B cell (primary cell): ENCODE measurements at regions of chr14 and their contacts with region 1.

Region 1: GRCh38 chr14:35046048-35046741 is at the start of gene FAM177A1:
- DNase-seq: peak; percentile 99
- ATAC-seq: peak; percentile 94
- H3K4me3 ChIP-seq: peak within 1 kb of the TSS; percentile 70 to 97 (median 80)
- H3K4me3 Mint-ChIP-seq: peak within 1 kb of the TSS; percentile 87
- H3K27ac ChIP-seq: peak within 1 kb of the TSS; percentile 94 to 96
- H3K27ac Mint-ChIP-seq: peak within 1 kb of the TSS; percentile 95
- H3K4me1 ChIP-seq: peaks cover 11 to 15% of the 10 kb centered on the region in 2 donors
- H3K4me1 Mint-ChIP-seq: peaks cover 26% of the 10 kb centered on the region
- H3K27me3 ChIP-seq: no peaks in the 10 kb centered on the region
- H3K27me3 Mint-ChIP-seq: no peaks in the 10 kb centered on the region
- CTCF ChIP-seq: no peak
- total RNA-seq, gene FAM177A1: 32.1 and 39.4 TPM in 2 replicates

Region 2: GRCh38 chr14:34629657-34630529 is 416.3 kb before region 1 on chr14 and contains the start of gene SNX6:
- CTCF ChIA-PET with region 1: no interaction called
- POLR2A ChIA-PET with region 1: no interaction called
- intact Hi-C with region 1: loop called (anchors 5 kb)
- DNase-seq: peak; percentile 89
- ATAC-seq: peak; percentile 98
- H3K4me3 ChIP-seq: peak within 1 kb of the TSS; percentile 50 to 98 (median 96)
- H3K4me3 Mint-ChIP-seq: peak within 1 kb of the TSS; percentile 95
- H3K27ac ChIP-seq: peak within 1 kb of the TSS; percentile 85 to 94
- H3K27ac Mint-ChIP-seq: peak within 1 kb of the TSS; percentile 93
- H3K4me1 ChIP-seq: peaks cover 11 to 18% of the 10 kb centered on the region in 2 donors
- H3K4me1 Mint-ChIP-seq: peaks cover 18% of the 10 kb centered on the region
- H3K27me3 ChIP-seq: peaks cover 0 to 3% (median 0%) of the 10 kb centered on the region in 4 experiments
- H3K27me3 Mint-ChIP-seq: no peaks in the 10 kb centered on the region
- CTCF ChIP-seq: no peak
- total RNA-seq, gene SNX6: 61.0 and 66.3 TPM in 2 replicates

Region 3: GRCh38 chr14:34982417-34983147 is 63.6 kb before region 1 on chr14 and contains the start of gene SRP54:
- CTCF ChIA-PET with region 1: interaction called, 15 read pairs
- POLR2A ChIA-PET with region 1: interaction called, 22 read pairs
- intact Hi-C with region 1: loop called (anchors 1 kb)
- DNase-seq: peak; percentile 99
- ATAC-seq: peak; percentile 91
- H3K4me3 ChIP-seq: peak within 1 kb of the TSS; percentile 71 to 99 (median 95)
- H3K4me3 Mint-ChIP-seq: no peak within 1 kb of the TSS
- H3K27ac ChIP-seq: peak within 1 kb of the TSS; percentile 95 to 97
- H3K27ac Mint-ChIP-seq: no peak within 1 kb of the TSS
- H3K4me1 ChIP-seq: peaks cover 25 to 26% of the 10 kb centered on the region in 2 donors
- H3K4me1 Mint-ChIP-seq: peaks cover 23% of the 10 kb centered on the region
- H3K27me3 ChIP-seq: no peaks in the 10 kb centered on the region
- H3K27me3 Mint-ChIP-seq: no peaks in the 10 kb centered on the region
- CTCF ChIP-seq: no peak
- total RNA-seq, gene SRP54: 54.9 and 59.5 TPM in 2 replicates

Region 4: DNA sequence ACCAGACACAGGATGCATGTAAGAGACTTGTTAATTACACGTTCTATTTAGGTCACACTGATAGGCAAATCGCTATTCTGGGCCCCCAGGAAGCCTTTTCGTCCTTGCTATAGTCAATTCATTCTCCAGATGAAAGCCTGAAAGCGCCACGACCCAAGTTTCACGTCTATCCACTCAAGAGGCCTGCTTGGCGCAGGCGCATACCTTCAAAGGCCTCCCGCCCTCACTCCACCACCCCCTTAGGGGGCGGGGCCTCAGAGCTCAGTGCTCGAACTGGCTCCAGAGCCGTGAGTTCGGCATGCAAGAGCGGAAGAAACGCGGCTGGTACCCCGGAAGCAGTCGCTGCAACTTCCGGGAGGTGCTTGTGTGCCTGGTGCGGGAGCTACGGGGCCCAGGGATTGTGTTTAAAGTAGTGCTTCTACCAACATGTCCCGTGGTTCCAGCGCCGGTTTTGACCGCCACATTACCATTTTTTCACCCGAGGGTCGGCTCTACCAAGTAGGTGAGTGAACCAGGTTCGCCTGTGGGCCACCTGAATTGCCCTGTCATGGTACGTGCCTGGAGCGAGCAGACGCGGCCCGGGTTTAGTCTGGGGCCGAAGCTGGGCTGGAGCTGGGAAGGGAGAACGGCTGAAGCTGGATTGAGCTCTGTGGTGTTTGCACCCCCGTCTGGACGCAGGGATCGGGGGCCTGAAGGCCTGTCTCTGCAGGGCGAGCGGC is 246.0 kb after region 1 on chr14 and contains the start of gene PSMA6:
- CTCF ChIA-PET with region 1: no interaction called
- POLR2A ChIA-PET with region 1: interaction called, 6 read pairs
- intact Hi-C with region 1: loop called (anchors 1 kb)
- DNase-seq: peak; percentile 99
- ATAC-seq: peak; percentile 98
- H3K4me3 ChIP-seq: peak within 1 kb of the TSS; percentile 71 to 96 (median 93)
- H3K4me3 Mint-ChIP-seq: peak within 1 kb of the TSS; percentile 99
- H3K27ac ChIP-seq: peak within 1 kb of the TSS; percentile 75 to 93
- H3K27ac Mint-ChIP-seq: peak within 1 kb of the TSS; percentile 96
- H3K4me1 ChIP-seq: peaks cover 34 to 44% of the 10 kb centered on the region in 2 donors
- H3K4me1 Mint-ChIP-seq: peaks cover 44% of the 10 kb centered on the region
- H3K27me3 ChIP-seq: no peaks in the 10 kb centered on the region
- H3K27me3 Mint-ChIP-seq: no peaks in the 10 kb centered on the region
- CTCF ChIP-seq: no peak
- total RNA-seq, gene PSMA6: 70.6 and 86.8 TPM in 2 replicates

Region 5: GRCh38 chr14:35808076-35808652 is 762.0 kb after region 1 on chr14:
- CTCF ChIA-PET with region 1: no interaction called
- POLR2A ChIA-PET with region 1: no interaction called
- intact Hi-C with region 1: loop called (anchors 1 kb)
- DNase-seq: no peak
- ATAC-seq: no peak
- H3K4me3 ChIP-seq: peak overlapping the region; percentile 57 to 81 (median 70)
- H3K4me3 Mint-ChIP-seq: peak overlapping the region; percentile 98
- H3K27ac ChIP-seq: peak overlapping the region; percentile 78 to 88
- H3K27ac Mint-ChIP-seq: peak overlapping the region; percentile 95
- H3K4me1 ChIP-seq: peaks cover 12 to 14% of the 10 kb centered on the region in 2 donors
- H3K4me1 Mint-ChIP-seq: peaks cover 29% of the 10 kb centered on the region
- H3K27me3 ChIP-seq: no peaks in the 10 kb centered on the region
- H3K27me3 Mint-ChIP-seq: no peaks in the 10 kb centered on the region
- CTCF ChIP-seq: no peak